Activated CD8-positive, alpha-beta T cell treated with anti-CD3 and anti-CD28 coated beads for 36 hours (primary cell): ENCODE measurements at regions of chr12 and their contacts with region 1.

Region 1: DNA sequence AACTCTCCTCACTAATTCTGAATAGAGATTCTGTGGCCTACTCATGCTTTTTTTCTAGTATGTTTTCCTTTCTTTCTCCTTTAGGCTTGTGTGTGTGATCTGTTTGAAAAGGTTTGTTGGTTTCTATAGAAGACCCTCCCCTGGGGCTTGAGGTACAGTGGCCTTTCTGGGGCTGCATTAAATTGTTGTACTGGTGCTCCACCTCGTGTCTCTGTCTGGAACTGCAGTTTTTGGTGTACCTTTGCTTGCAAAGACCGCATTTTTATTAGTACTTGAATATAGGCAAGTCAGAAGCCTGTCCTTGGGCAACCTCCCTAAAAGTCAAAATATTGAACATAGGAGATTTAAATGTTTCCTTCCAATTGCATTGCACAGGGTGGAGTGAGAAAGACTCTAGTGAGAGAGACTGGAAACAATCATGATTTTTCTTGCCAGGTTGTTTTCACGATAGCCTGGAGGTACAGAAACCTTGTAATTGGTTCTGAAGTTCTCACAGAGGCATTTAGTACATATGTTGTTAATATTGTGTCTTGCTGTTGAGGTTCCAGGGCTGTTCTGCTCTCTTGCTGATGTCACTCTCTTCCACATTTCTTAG is 39.0 kb downstream of the SLCO1B1 start:
- DNase-seq: peak; percentile 43
- ATAC-seq: peak; percentile 45
- H3K4me3 Mint-ChIP-seq: no peak overlapping the region
- H3K27ac Mint-ChIP-seq: no peak overlapping the region
- H3K4me1 Mint-ChIP-seq: no peaks in the 10 kb centered on the region
- H3K27me3 Mint-ChIP-seq: no peaks in the 10 kb centered on the region
- CTCF ChIP-seq: peak; percentile 78

Region 2: DNA sequence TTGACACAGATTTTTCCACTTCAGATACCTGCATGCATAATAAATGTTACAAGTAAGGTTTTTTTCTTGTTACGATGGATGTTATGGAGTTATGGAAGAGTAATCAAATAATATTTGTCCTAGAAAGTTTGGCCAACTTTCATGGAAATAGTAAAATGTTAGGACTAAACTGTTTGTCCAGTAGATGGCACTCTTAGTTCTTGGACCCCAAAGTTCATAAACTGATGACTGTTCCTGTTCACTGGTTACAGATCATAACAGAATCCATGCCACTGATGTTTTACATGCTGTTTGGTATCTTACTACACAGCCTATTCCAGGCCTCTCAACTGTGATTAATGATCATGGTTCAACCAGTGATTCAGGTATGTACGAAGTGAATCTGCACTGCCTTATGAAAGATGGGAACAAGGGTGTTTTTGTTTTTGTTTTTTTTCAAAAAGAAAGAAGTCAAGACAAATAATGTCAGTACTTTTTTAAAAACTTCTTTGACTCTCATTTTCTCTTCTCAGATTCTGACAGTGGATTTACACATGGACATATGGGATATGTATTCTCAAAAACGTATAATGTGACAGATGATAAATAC is 523.6 kb before region 1 on chr12:
- CTCF ChIA-PET with region 1: no interaction called
- POLR2A ChIA-PET with region 1: no interaction called
- intact Hi-C with region 1: loop called (anchors 10 kb)
- DNase-seq: no peak
- ATAC-seq: no peak
- H3K4me3 Mint-ChIP-seq: no peak overlapping the region
- H3K27ac Mint-ChIP-seq: no peak overlapping the region
- H3K4me1 Mint-ChIP-seq: no peaks in the 10 kb centered on the region
- H3K27me3 Mint-ChIP-seq: no peaks in the 10 kb centered on the region
- CTCF ChIP-seq: peak; percentile 54

Region 3: GRCh38 chr12:20946732-20947131 is 223.2 kb before region 1 on chr12:
- CTCF ChIA-PET with region 1: no interaction called
- POLR2A ChIA-PET with region 1: no interaction called
- intact Hi-C with region 1: loop called (anchors 10 kb)
- DNase-seq: peak; percentile 41
- ATAC-seq: no peak
- H3K4me3 Mint-ChIP-seq: no peak overlapping the region
- H3K27ac Mint-ChIP-seq: no peak overlapping the region
- H3K4me1 Mint-ChIP-seq: no peaks in the 10 kb centered on the region
- H3K27me3 Mint-ChIP-seq: no peaks in the 10 kb centered on the region
- CTCF ChIP-seq: peak; percentile 58

Region 4: GRCh38 chr12:21183721-21184275 is 13.8 kb after region 1 on chr12:
- CTCF ChIA-PET with region 1: no interaction called
- POLR2A ChIA-PET with region 1: no interaction called
- intact Hi-C with region 1: no loop called
- DNase-seq: no peak
- ATAC-seq: no peak
- H3K4me3 Mint-ChIP-seq: no peak overlapping the region
- H3K27ac Mint-ChIP-seq: no peak overlapping the region
- H3K4me1 Mint-ChIP-seq: no peaks in the 10 kb centered on the region
- H3K27me3 Mint-ChIP-seq: no peaks in the 10 kb centered on the region
- CTCF ChIP-seq: no peak